ENCODE measurements at regions of chr17 and their contacts with region 1.

Region 1: GRCh38 chr17:68057531-68057952 is 22.0 kb downstream of the KPNA2 start:
- DNase-seq: peak; percentile 62
- H3K4me3 Mint-ChIP-seq: no peak overlapping the region
- H3K27ac Mint-ChIP-seq: no peak overlapping the region
- H3K4me1 Mint-ChIP-seq: peaks cover 7% of the 10 kb centered on the region
- H3K27me3 Mint-ChIP-seq: peaks cover 2% of the 10 kb centered on the region

Region 2: GRCh38 chr17:68172461-68172954 is 115.0 kb after region 1 on chr17:
- CTCF ChIA-PET with region 1: interaction called, 10 read pairs
- POLR2A ChIA-PET with region 1: no interaction called
- DNase-seq: peak; percentile 81
- H3K4me3 Mint-ChIP-seq: no peak overlapping the region
- H3K27ac Mint-ChIP-seq: no peak overlapping the region
- H3K4me1 Mint-ChIP-seq: peaks cover 27% of the 10 kb centered on the region
- H3K27me3 Mint-ChIP-seq: no peaks in the 10 kb centered on the region